Calu3 (cell line): ENCODE measurements at regions of chr11 and their contacts with region 1.

Region 1: DNA sequence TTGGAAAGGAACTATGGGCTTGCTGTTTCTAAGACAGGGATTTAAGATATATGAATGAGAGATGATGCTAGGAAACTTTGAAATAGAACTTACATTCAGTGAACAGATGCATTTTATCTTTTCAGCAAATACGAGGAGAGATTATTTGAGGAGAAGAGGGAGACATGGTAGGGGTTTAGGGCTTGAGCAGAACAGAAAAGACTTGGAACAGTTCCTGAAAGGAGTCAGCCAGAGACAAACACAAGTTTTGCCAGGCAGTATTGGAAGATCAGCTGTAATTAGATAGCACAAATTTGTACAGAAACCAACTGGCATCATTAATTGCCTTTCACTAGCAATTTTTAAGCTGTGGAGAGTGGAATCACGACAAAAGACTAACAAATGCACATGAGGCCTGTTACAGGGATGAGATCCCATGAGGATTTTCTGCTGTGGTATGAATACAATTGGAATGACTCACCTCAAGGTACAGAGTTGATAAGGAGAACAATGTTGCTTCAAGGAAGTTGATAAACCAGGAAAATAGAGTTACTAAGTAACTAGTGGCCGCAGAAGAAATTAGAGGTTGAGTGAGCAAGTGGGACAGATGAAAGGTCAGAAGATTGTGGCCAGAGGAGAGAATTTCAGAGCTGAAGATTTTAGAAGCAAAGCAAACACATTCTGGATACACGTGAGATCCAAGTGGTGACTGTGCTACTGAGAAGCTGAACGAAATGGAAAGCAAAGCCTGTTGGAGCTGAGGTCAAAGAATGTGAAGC is 67.9 kb downstream of the CYB5R2 start:
- DNase-seq: peak; percentile 47
- H3K4me3 Mint-ChIP-seq: no peak overlapping the region
- H3K27ac Mint-ChIP-seq: no peak overlapping the region
- H3K4me1 Mint-ChIP-seq: peaks cover 26% of the 10 kb centered on the region
- H3K27me3 Mint-ChIP-seq: no peaks in the 10 kb centered on the region
- CTCF ChIP-seq: no peak

Region 2: DNA sequence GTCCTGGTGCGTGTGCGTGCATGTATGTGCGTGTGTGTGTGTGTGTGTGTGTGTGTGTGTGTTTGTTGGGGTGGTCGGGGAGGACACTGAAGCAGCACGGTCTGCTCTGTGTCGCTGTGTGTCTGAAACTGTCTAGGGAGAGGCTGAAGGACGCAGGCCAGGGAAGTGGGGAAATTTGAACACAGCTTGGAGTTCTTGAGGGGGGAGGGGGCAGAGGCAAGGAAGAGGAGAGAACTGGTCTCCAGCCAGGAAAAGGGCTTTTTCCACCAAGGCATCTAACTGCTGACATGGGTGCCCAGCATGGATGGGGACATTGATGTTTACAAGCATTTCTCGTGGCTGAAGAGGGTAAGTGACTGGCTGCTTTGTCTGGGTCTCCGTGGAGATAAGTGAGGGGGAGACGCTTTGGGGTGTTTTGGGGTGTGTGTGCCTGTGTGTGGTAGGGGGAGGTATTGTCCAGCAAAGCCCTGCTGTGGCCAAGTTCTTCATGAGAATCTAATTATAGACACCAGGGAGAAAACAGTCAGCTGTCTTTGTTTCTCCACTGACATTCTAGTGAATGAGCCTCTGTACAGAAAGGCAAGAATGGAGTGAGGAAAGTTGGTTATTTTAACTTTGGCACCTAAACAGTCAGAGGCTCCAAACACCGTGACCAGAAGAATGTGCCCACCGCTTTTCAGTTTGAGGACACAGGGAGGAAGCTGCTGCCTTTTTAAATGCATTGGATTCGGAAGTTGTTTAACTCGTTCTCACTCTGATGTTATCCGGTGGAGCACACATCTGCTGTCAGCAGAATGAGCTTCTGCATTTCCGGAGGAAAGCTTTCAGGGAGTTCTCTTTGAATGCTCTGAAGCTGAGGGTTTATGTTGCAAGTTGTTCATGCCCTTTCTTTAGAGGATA is 27.8 kb before region 1 on chr11:
- CTCF ChIA-PET with region 1: interaction called, 13 read pairs
- intact Hi-C with region 1: loop called (anchors 1 kb)
- DNase-seq: no peak
- H3K4me3 Mint-ChIP-seq: peak overlapping the region; percentile 40
- H3K27ac Mint-ChIP-seq: peak overlapping the region; percentile 73
- H3K4me1 Mint-ChIP-seq: peaks cover 70% of the 10 kb centered on the region
- H3K27me3 Mint-ChIP-seq: no peaks in the 10 kb centered on the region
- CTCF ChIP-seq: no peak

Region 3: GRCh38 chr11:7648264-7648663 is 42.9 kb after region 1 on chr11:
- CTCF ChIA-PET with region 1: no interaction called
- intact Hi-C with region 1: loop called (anchors 5 kb)
- DNase-seq: no peak
- H3K4me3 Mint-ChIP-seq: no peak overlapping the region
- H3K27ac Mint-ChIP-seq: no peak overlapping the region
- H3K4me1 Mint-ChIP-seq: no peaks in the 10 kb centered on the region
- H3K27me3 Mint-ChIP-seq: no peaks in the 10 kb centered on the region
- CTCF ChIP-seq: no peak

Region 4: DNA sequence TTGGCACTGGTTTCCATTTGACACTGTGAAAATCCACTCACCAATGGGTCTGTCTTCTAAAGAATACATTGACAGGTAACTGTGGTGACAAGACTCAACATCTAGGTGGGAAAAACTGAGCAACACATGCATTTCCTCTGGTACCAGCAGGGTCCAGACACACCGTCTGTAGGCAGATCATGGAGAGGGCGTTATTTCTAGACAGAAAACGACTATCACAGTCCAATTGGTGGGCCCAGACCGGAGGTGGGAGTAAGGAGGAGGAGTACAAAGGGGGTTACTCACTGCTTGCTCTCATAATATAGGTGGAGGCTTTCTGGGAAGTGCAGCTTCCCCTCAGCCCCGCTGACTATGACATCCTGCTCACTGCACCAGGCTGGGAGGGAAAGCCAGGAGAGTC is 91.1 kb after region 1 on chr11:
- CTCF ChIA-PET with region 1: no interaction called
- intact Hi-C with region 1: no loop called
- DNase-seq: no peak
- H3K4me3 Mint-ChIP-seq: no peak overlapping the region
- H3K27ac Mint-ChIP-seq: no peak overlapping the region
- H3K4me1 Mint-ChIP-seq: no peaks in the 10 kb centered on the region
- H3K27me3 Mint-ChIP-seq: peaks cover 80% of the 10 kb centered on the region
- CTCF ChIP-seq: no peak